Ovary (tissue), 10 donors: ENCODE measurements at regions of chr18 and their contacts with region 1.

Region 1: DNA sequence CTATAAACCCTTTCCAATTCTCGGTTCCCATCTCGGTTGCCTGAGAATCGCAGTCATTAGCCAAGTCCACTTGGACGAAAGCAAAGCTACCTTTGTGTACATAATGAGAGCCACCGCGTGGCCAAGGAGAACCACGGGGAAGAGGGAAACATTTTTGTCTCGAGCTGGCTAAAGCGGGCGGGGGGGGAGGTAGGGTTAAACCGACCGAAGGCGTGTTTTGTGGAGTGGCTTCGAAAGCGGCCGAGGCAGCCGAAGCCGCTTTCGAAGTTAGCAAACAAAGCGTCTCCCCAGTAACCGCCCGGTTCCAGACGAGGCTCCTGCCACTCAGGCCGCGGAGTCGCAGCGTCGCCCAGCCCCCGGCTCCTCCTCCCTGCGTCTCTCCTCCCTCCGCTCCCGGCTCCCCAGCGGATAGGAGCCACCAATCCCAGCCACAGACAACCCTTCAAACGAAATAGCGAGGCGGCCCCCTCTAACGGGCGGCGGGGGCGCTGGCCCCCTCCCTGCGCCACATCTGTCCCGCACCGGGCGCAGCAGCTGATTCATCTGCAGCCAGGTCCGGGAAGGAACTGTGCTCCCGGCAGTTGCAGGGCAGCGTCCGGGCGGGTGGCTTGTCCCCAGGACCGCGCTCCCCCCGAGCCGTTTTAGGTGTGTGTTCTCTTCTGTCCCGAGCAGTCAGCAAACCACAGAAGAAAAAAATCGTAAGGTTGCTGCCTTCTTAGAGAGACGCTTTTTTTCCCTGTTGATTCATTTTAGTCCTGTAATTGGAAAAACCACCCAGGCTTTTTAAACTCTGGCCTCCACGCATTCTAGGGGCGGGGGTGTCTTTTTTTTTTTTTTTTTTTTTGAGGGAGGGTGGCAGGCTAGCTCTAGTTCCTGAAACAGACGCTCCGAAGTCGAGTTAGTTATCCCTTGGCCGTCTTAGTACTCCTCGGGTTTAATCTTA is 1.8 kb upstream of the TGIF1 start:
- DNase-seq: peak; percentile 92 to 94 (median 93)
- H3K4me3 ChIP-seq: peak overlapping the region; percentile 66
- H3K27ac ChIP-seq: peak overlapping the region; percentile 72 to 97
- H3K4me1 ChIP-seq: peaks cover 5% of the 10 kb centered on the region
- H3K27me3 ChIP-seq: no peaks in the 10 kb centered on the region
- CTCF ChIP-seq: peak in 1 of 3 donors; percentile 27
- EP300 ChIP-seq: no peak
- POLR2A ChIP-seq: peak; percentile 77

Region 2: GRCh38 chr18:2571200-2572143 is 876.7 kb before region 1 on chr18 and contains the starts of genes METTL4 and NDC80:
- intact Hi-C with region 1: no loop called
- DNase-seq: peak; percentile 75 to 90 (median 85)
- H3K4me3 ChIP-seq: peak within 1 kb of the TSS; percentile 75
- H3K27ac ChIP-seq: peak within 1 kb of the TSS; percentile 82 to 95
- H3K4me1 ChIP-seq: peaks cover 5% of the 10 kb centered on the region
- H3K27me3 ChIP-seq: no peaks in the 10 kb centered on the region
- CTCF ChIP-seq: no peak
- EP300 ChIP-seq: no peak
- POLR2A ChIP-seq: peak; percentile 45
- total RNA-seq, gene METTL4: 4.8 to 16.0 (median 8.7) TPM
- total RNA-seq, gene NDC80: 0.13 to 1.6 (median 0.34) TPM in 5 of 7 donors, not detected in the others

Region 3: DNA sequence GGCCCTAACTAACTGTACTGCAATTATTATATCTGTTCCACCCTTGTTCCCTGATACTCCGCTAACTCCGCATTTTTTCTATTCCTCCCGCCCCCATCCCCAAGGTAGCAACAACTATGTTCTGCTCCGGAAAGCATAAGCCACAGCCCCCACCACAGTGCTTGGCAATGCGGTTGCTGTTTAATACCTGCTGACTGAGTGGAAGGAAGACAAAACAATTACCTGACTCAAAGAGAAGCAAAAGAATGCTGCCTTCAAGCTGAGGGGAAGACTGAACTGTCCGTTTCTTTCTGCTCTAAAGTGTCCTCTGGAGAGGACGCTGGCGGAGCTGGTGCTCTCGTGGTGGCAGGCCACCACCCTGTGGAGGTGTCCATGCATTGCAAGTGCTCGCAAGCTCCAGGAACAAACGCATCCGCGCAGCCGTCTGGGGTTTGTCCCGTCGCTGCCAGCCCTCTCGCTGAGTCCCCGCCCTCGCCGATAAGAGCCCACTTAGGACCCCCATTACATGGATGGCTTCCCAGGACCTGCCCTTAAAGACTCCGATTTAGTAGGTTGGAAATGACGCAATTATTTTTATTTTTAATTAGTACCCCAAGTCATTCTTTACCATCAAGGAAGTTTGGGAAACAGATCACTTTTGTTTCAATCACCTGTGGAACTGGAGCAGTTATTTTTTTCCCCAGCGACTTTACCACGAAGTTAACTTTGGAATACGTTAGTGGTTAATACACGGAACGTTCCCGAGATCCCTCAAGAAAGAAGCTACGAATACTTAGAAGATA is 202.1 kb before region 1 on chr18:
- intact Hi-C with region 1: loop called in 1 of 4 experiments (anchors 2 kb)
- DNase-seq: peak; percentile 84 to 91 (median 84)
- H3K4me3 ChIP-seq: peak overlapping the region; percentile 99
- H3K27ac ChIP-seq: peak overlapping the region; percentile 87 to 93
- H3K4me1 ChIP-seq: peaks cover 4% of the 10 kb centered on the region
- H3K27me3 ChIP-seq: no peaks in the 10 kb centered on the region
- CTCF ChIP-seq: peak; percentile 47 to 93 (median 80)
- EP300 ChIP-seq: no peak
- POLR2A ChIP-seq: peak; percentile 15

Region 4: DNA sequence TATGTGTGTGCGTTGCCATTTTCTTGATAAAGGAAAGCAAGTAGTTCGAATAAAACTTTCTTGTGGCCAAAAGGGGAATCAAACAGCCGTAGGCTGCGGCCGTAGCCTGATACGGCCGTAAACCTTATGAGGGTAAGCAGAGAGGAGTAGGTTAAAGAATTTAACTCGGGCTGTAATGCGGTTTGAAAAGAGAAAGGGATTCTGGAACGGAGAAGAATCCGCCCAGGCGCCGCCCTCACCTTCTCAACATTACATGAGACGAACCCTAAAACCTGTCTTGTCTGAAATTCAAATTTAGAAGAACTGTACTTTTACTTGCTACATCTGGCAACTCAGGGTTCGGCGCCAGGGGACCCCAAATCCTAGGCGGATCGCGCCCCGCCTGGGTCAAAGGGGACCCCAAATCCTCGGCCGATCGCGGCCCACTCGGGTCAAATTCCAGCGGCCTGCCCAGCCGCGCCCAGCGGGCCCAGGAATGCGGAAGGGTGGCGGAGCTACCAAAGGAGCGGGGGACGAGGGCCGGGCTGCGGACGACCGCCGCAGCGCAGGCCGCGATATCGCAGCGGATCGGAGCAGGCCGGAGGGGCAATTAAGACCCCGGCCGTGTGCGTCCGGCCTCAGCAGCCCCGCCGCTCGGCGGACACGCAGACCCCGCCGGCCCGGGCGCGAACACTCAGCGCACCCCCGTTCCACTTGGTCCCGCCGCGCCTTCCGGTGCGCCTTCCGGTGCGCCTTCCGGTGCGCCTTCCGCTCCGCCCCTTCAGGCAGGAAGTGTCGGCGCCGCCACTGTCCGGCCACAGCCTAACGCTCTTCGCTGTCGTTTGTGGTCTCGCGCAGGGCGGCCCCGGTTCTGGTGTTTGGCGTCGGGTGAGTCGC is 186.6 kb before region 1 on chr18 and contains the start of gene MYL12B:
- intact Hi-C with region 1: loop called in 1 of 4 experiments (anchors 5 kb)
- DNase-seq: peak; percentile 73 to 88 (median 77)
- H3K4me3 ChIP-seq: peak within 1 kb of the TSS; percentile 87
- H3K27ac ChIP-seq: peak within 1 kb of the TSS; percentile 79 to 80
- H3K4me1 ChIP-seq: peaks cover 18% of the 10 kb centered on the region
- H3K27me3 ChIP-seq: no peaks in the 10 kb centered on the region
- CTCF ChIP-seq: peak in 1 of 3 donors; percentile 51
- EP300 ChIP-seq: no peak
- POLR2A ChIP-seq: peak; percentile 54
- total RNA-seq, gene MYL12B: 165 to 279 (median 194) TPM

Region 5: GRCh38 chr18:3498698-3499471 is 50.7 kb after region 1 on chr18:
- intact Hi-C with region 1: no loop called
- DNase-seq: peak; percentile 27 to 63 (median 41)
- H3K4me3 ChIP-seq: peak overlapping the region; percentile 38
- H3K27ac ChIP-seq: no peak overlapping the region
- H3K4me1 ChIP-seq: peaks cover 2% of the 10 kb centered on the region
- H3K27me3 ChIP-seq: no peaks in the 10 kb centered on the region
- CTCF ChIP-seq: no peak
- EP300 ChIP-seq: no peak
- POLR2A ChIP-seq: no peak

Region 6: GRCh38 chr18:3665780-3666525 is 217.8 kb after region 1 on chr18:
- intact Hi-C with region 1: loop called (anchors 5 to 10 kb)
- DNase-seq: peak; percentile 71 to 89 (median 87)
- H3K4me3 ChIP-seq: no peak overlapping the region
- H3K27ac ChIP-seq: peak overlapping the region in 1 of 2 donors; percentile 75
- H3K4me1 ChIP-seq: no peaks in the 10 kb centered on the region
- H3K27me3 ChIP-seq: no peaks in the 10 kb centered on the region
- CTCF ChIP-seq: peak; percentile 85 to 95 (median 95)
- EP300 ChIP-seq: no peak
- POLR2A ChIP-seq: no peak